MCF 10A (cell line): ENCODE measurements at regions of chr16 and their contacts with region 1.

Region 1: GRCh38 chr16:15874745-15875314 is 13.6 kb downstream of the CEP20 start:
- DNase-seq: peak; percentile 75
- H3K4me3 Mint-ChIP-seq: no peak overlapping the region
- H3K27ac Mint-ChIP-seq: peak overlapping the region; percentile 2
- H3K4me1 Mint-ChIP-seq: peaks cover 13% of the 10 kb centered on the region
- H3K27me3 Mint-ChIP-seq: no peaks in the 10 kb centered on the region
- CTCF ChIP-seq: peak; percentile 70

Region 2: DNA sequence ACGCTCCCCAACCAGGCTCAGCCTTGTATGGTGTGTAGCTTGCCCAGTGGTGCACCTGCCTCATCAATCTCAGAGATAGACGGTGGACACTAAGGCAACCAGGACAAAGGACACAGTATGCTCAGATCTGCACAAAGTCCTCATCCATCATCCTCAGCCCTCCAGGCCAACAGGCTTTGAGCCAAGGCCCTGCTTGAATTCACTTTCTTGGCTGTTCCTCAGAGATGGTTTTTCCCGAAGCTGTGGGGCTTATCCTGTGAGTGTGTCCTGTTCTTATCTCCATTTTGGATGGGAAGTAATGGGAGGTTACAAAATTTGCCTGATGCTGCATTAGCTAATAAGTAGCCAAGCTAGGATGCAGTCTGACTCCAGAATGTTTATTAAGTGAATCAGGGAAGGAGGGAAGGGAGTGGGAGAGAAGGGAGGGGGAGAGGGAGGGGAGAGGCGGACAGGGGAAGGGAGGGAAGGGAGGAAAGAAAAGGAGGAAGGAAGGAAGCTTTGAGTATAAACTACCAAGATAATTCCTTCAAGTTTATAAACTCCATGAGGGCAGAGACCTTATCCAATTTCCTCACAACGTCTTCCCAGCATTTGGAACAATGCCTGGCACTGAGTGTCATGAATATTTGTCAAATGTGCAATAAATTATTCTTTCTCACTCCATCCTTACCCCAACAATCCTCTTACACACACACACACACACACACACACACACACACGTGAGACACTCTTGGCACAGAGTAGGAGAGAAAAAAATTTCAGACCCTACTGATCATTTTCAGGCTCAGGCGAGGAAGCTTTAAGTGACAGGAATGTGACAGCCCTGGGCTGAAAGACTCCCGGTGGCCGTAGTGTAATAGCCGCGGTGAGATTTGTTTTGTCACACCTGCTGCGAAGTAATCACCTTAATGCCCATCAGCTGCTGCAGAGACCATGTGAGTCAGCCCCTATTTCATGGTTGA is 356.2 kb before region 1 on chr16:
- CTCF ChIA-PET with region 1: no interaction called
- POLR2A ChIA-PET with region 1: no interaction called
- intact Hi-C with region 1: no loop called
- DNase-seq: no peak
- H3K4me3 Mint-ChIP-seq: no peak overlapping the region
- H3K27ac Mint-ChIP-seq: no peak overlapping the region
- H3K4me1 Mint-ChIP-seq: peaks cover 6% of the 10 kb centered on the region
- H3K27me3 Mint-ChIP-seq: no peaks in the 10 kb centered on the region
- CTCF ChIP-seq: no peak

Region 3: DNA sequence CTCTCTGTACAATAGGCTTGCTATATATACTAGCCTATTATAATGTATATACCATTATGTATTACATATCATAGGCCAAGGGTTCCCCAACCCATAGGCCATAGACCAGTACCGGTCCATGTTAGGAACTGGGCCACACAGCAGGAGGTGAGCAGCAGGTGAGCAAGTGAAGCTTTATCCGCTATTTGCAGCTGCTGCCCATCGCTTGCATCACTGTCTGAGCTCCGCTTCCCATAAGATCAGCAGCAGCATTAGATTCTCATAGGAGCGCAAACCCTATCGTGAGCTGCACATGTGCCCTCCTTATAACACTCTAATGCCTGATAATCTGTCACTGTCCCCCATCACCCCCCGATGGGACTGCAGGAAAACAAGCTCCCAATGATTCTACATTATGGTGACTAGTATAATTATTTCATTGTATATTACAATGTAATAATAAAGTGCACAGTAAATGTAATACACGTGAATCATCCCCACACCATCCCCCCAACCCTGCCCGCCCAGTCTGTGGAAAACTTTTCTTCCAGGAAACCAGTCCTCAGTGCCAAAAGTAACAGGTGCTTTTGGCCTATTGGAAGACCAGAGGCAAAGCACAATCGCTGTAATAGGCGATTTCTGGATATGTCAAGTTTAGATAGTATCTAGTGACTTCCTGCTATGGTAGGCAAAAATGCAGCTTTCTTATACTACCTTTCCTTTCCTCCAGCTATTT is 102.1 kb before region 1 on chr16:
- CTCF ChIA-PET with region 1: no interaction called
- POLR2A ChIA-PET with region 1: no interaction called
- intact Hi-C with region 1: no loop called
- DNase-seq: no peak
- H3K4me3 Mint-ChIP-seq: no peak overlapping the region
- H3K27ac Mint-ChIP-seq: no peak overlapping the region
- H3K4me1 Mint-ChIP-seq: no peaks in the 10 kb centered on the region
- H3K27me3 Mint-ChIP-seq: peaks cover 43% of the 10 kb centered on the region
- CTCF ChIP-seq: no peak

Region 4: DNA sequence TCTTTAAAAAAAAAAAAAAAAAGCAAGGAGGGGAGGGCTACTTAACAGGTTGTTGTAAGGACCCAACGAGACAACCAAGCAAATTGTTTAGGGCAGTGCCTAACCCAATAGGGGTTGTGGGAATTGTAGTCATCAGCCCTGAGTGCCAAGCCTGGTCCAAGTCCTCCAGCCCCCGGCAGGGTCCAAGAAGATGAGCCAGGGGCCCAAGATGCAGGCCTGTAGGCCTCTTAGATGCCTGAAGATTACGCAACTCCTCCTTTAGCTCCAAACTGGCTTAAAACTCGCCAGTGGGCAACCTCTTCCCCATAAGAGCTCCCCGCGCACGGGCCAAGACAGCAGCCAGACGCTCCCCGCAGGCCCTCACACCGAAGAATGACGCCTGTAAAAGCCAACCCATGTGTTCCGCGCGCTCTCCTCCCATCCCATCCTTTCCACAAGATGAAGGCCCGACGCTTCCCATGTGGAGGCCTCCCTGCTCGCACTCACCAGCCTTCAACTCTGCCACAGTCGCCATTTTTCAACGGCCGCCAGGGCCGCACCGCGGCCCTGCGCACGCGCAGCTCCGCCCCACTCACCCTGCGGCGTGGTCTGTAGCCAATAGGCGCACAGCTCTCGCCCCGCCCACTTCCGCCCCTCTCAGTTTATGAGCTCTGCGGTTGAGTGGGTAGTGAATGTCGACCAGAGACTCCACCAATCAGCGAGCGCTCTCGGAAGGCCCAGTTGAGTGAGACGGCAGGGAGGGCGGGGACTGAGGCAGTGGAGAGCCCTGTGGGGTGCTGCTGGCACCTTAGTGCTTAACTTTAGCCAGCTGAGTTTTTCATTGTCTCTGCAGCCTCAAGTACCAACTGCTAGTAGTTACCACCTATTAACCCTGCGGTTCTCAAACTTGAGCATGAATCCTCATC is 13.5 kb after region 1 on chr16 and contains the start of gene CEP20:
- CTCF ChIA-PET with region 1: interaction called, 32 read pairs
- POLR2A ChIA-PET with region 1: interaction called, 37 read pairs
- intact Hi-C with region 1: no loop called
- DNase-seq: peak; percentile 99
- H3K4me3 Mint-ChIP-seq: peak within 1 kb of the TSS; percentile 94
- H3K27ac Mint-ChIP-seq: peak within 1 kb of the TSS; percentile 91
- H3K4me1 Mint-ChIP-seq: peaks cover 15% of the 10 kb centered on the region
- H3K27me3 Mint-ChIP-seq: no peaks in the 10 kb centered on the region
- CTCF ChIP-seq: no peak
- total RNA-seq, gene CEP20: 54.7 and 70.1 TPM in 2 replicates

Region 5: DNA sequence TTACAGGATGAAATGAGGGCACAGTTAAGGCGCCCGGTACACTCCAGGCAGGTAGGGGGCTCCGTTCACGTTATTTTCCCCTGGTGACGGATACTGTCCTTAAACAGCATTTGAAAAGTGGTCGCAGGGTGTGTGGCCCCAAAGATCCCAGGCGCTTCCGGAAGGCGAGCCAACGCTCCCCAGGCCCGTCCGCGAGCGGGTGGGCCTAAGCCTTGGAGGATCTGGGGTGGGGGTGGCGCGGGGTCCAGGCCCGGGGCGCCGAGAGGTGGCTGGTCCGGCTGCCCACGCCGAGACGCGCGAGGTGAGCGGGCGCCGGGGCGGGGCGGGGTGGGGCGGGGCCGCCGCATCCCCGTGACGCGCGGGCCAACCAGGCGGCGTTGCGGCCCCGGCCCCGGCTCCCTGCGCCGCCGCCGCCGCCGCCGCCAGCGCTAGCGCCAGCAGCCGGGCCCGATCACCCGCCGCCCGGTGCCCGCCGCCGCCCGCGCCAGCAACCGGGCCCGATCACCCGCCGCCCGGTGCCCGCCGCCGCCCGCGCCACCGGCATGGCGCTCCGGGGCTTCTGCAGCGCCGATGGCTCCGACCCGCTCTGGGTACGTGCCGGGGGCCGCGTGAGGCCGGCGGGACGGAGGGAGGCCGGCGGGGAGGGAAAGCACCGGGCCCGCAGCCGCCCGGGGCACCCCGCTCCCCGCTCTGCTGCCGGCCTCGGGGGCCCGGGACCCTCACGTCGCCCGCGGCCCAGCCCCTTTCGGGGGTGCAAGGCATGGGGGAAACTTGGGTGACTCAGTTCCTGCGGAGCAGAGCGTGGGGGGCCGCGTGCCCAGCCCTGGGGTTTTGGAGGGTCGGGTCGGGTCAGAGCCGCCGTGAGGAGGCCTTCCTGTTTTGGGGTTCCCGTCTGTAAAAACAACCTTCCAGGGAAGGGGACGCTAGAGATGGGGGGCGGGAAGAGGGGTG is 74.7 kb after region 1 on chr16 and contains the start of gene ABCC1:
- CTCF ChIA-PET with region 1: interaction called, 16 read pairs
- POLR2A ChIA-PET with region 1: interaction called, 6 read pairs
- intact Hi-C with region 1: loop called (anchors 1 kb)
- DNase-seq: no peak
- H3K4me3 Mint-ChIP-seq: peak within 1 kb of the TSS; percentile 87
- H3K27ac Mint-ChIP-seq: peak within 1 kb of the TSS; percentile 92
- H3K4me1 Mint-ChIP-seq: peaks cover 23% of the 10 kb centered on the region
- H3K27me3 Mint-ChIP-seq: no peaks in the 10 kb centered on the region
- CTCF ChIP-seq: no peak
- total RNA-seq, gene ABCC1: 72.5 and 95.3 TPM in 2 replicates

Region 6: DNA sequence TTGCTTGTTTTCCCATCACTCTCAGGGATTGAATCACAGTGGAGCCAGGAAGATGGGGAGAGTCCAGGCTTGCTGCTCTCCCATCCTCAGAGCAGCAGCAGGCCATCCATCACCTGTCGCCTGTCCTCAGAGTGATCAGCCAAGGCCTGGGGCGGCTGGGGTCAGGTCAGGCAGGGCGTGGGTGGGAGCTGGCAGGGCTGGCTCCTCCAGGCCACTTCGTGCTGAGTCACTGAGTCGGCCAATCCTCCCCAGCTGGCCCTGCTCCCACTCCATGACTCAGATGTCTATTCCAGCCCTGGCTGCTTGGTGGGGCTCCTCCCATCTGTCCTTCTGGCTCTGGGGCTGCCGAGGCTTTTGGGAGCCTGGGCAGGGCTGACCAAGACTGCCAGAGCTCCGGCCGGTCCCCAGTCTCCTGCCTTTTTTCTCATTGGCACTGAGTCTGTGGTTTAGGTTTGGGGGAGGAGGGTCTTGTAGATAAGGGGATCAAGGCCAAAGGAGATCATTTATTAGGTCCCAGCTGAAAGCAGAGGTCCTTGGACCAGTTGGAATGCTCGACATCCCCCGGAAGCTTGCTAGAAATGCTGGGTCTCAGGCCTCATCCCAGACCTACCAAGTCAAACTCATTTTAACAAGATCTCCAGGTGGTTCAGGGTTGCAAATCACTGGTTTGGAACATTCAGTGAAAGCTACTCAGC is 147.3 kb after region 1 on chr16:
- CTCF ChIA-PET with region 1: interaction called, 33 read pairs
- POLR2A ChIA-PET with region 1: interaction called, 11 read pairs
- intact Hi-C with region 1: loop called (anchors 1 kb)
- DNase-seq: peak; percentile 97
- H3K4me3 Mint-ChIP-seq: peak overlapping the region; percentile 28
- H3K27ac Mint-ChIP-seq: peak overlapping the region; percentile 69
- H3K4me1 Mint-ChIP-seq: peaks cover 44% of the 10 kb centered on the region
- H3K27me3 Mint-ChIP-seq: no peaks in the 10 kb centered on the region
- CTCF ChIP-seq: no peak

Region 7: DNA sequence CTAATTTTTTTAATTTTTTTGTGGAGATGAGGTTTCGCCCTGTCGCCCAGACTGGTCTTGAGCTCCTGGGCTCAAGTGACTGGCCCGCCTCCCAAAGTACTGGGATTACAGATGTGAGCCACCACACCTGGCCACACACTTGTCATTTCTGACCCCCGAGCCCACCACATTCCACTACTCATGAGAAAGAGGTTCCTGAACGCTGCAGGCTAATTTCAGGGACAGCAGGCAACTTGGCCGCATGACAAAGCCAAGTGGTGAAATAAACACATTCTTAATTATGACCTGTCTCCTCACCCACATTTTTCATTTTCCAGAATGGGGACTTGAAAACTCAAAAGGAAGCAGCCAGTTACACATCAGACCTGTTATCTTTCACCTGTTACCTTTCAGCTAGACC is 233.9 kb after region 1 on chr16:
- CTCF ChIA-PET with region 1: interaction called, 10 read pairs
- POLR2A ChIA-PET with region 1: no interaction called
- intact Hi-C with region 1: no loop called
- DNase-seq: no peak
- H3K4me3 Mint-ChIP-seq: no peak overlapping the region
- H3K27ac Mint-ChIP-seq: no peak overlapping the region
- H3K4me1 Mint-ChIP-seq: no peaks in the 10 kb centered on the region
- H3K27me3 Mint-ChIP-seq: no peaks in the 10 kb centered on the region
- CTCF ChIP-seq: no peak

Region 8: GRCh38 chr16:16127469-16128116 is 252.8 kb after region 1 on chr16:
- CTCF ChIA-PET with region 1: interaction called, 66 read pairs
- POLR2A ChIA-PET with region 1: interaction called, 5 read pairs
- intact Hi-C with region 1: loop called (anchors 1 kb)
- DNase-seq: peak; percentile 74
- H3K4me3 Mint-ChIP-seq: no peak overlapping the region
- H3K27ac Mint-ChIP-seq: no peak overlapping the region
- H3K4me1 Mint-ChIP-seq: no peaks in the 10 kb centered on the region
- H3K27me3 Mint-ChIP-seq: no peaks in the 10 kb centered on the region
- CTCF ChIP-seq: peak; percentile 78

Region 9: DNA sequence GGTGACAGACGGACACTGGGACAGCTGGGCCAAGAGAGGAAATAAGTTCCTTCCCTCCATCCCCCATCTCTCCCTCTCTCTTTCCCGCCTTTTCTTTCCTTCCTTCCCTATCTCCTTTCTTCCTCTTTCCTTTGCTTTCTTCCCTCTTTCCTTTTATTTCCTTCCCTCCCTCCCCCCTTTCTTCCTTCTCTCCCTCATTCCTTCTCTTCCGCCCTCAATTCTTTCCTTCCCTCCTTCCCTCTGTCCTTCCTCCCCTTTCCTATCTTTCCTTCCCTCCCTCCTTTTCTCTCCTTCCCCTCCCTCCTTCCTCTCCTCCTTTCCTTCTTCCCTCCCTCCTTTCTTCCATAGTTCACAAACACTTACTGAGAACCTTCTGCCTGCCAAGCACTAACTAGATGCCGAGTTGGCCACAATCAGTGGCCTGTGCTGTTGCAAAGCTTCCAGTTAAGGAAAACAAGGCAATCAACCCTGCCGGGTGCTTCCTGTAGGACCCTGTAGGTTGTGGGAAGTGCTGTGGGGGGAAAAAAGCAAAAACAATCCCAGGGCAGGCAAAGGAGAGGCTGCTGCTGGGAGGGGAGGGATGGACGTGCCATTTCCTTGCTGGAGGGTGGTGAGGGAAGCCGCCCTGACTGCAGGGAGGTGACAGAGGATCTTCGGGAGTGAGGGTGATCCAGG is 316.8 kb after region 1 on chr16:
- CTCF ChIA-PET with region 1: interaction called, 3 read pairs
- POLR2A ChIA-PET with region 1: no interaction called
- intact Hi-C with region 1: loop called (anchors 10 kb)
- DNase-seq: no peak
- H3K4me3 Mint-ChIP-seq: no peak overlapping the region
- H3K27ac Mint-ChIP-seq: no peak overlapping the region
- H3K4me1 Mint-ChIP-seq: no peaks in the 10 kb centered on the region
- H3K27me3 Mint-ChIP-seq: peaks cover 14% of the 10 kb centered on the region
- CTCF ChIP-seq: no peak

Region 10: DNA sequence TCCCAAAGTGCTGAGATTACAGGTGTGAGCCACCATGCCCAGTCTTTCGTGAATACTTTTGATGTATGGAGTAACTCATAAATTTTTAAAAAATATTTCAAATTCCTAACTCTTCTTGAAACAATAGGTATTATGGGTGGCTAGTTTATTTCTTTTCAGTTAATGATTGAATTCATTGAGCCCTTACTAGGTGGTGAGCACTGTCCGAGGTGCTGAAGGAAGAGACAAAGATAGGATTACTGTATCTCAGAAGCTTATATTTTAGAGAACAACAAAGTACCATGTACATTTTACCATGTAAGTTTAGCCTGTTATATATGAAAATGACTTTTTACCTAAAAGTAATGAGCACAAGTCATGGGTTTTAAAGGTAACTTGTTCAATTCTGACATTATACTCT is 922.4 kb after region 1 on chr16:
- CTCF ChIA-PET with region 1: no interaction called
- POLR2A ChIA-PET with region 1: no interaction called
- intact Hi-C with region 1: no loop called
- DNase-seq: no peak
- H3K4me3 Mint-ChIP-seq: no peak overlapping the region
- H3K27ac Mint-ChIP-seq: no peak overlapping the region
- H3K4me1 Mint-ChIP-seq: no peaks in the 10 kb centered on the region
- H3K27me3 Mint-ChIP-seq: no peaks in the 10 kb centered on the region
- CTCF ChIP-seq: no peak